HepG2 (cell line): ENCODE measurements at regions of chr2 and their contacts with region 1.

Region 1: DNA sequence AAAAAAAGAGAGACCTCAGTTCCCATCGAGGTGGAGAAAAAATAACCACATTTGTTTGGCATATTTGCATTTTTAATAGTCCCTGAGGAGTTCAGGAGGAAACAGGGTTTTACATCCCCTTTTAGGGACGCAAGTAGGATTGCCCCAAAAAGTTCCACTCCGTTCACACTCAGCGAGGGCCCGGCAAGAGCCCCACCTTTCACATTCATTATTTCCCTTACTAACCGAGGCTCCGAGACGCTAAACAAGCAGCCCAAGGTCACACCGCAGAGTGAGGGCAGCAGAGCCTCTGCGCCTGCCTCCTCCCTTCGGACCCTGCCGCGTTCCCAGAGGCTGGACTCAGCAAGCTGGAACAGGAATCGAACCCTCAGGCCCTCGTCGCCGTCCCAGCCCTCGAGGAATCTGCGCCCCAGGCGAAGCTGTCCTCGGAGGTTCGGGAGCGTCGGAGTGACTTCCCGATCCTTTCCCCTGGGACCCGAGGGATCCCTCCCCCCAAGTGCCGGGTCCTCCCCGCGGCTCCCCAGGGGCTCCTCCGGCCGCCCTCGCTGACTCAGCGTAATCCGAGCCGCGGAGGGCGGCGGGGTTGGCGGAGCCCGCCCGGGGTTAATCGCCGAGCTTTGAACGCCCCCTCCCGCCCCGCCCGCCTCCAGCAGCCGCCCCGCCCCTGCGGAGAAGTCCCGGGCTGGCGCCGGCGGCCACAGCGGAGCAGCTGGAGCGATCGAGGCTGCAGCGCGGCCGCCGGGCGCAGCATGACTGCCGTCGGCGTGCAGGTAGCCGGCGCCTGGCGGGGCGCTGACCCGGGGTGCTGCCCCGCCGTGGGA is at the start of gene TMEM37:
- DNase-seq: peak; percentile 79
- ATAC-seq: peak; percentile 70
- H3K4me3 ChIP-seq: peak within 1 kb of the TSS; percentile 84 to 90 (median 86)
- H3K27ac ChIP-seq: peak within 1 kb of the TSS; percentile 88
- H3K4me1 ChIP-seq: peaks cover 88% of the 10 kb centered on the region
- H3K27me3 ChIP-seq: no peaks in the 10 kb centered on the region; a peak in 1 of 5 replicates
- CTCF ChIP-seq: 0 out of 2 replicates have a peak, but pooled peaks have one; percentile 2
- EP300 ChIP-seq: peak in 1 of 2 experiments; percentile 64; a peak in 2 of 4 replicates
- POLR2A ChIP-seq: peak in 1 of 2 experiments; percentile 79; a peak in 1 of 4 replicates
- RAD21 ChIP-seq: 0 out of 2 replicates have a peak, but pooled peaks have one; percentile 14
- total RNA-seq, gene TMEM37: 23.7 and 37.7 TPM in 2 replicates

Region 2: GRCh38 chr2:119441376-119442225 is 10.2 kb after region 1 on chr2:
- CTCF ChIA-PET with region 1: no interaction called
- POLR2A ChIA-PET with region 1: interaction called, 21 read pairs
- in situ Hi-C with region 1: no loop called
- intact Hi-C with region 1: no loop called
- DNase-seq: no peak
- ATAC-seq: no peak
- H3K4me3 ChIP-seq: no peak overlapping the region; a peak in 1 of 6 replicates
- H3K27ac ChIP-seq: no peak overlapping the region
- H3K4me1 ChIP-seq: peaks cover 64% of the 10 kb centered on the region
- H3K27me3 ChIP-seq: peaks cover 0 to 1% of the 10 kb centered on the region in 2 experiments; a peak in 1 of 5 replicates
- CTCF ChIP-seq: no peak
- EP300 ChIP-seq: no peak
- POLR2A ChIP-seq: no peak; a peak in 1 of 4 replicates
- RAD21 ChIP-seq: no peak

Region 3: DNA sequence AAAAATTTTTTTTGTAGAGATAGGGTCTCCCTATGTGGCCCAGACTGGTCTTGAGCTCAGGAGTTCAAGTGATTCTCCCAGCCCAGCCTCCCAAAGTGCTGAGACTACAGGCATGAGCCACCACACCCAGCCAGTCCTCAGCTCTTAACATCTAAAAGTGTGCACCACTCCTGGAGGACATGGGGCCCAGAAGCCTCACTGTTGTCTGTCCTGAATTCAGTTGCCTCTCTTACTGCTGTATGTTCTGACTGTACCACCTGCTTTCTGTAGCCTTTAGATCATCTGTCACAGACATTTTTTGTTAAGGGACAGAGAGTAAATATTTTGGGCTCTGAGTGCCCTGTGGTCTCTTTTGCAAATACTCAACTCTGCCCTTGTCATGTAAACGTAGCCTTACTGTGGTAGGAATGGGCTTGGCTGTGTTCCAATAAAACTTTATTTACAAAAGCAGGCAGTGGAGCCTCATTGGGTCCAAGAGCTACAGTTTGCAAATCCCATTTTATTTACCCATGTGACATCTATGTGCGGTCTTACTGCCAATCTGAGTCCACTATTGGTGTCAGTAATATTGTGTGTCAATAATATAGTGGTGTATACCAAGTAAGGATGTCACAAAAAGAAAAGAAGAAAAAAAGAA is 38.4 kb after region 1 on chr2:
- CTCF ChIA-PET with region 1: no interaction called
- POLR2A ChIA-PET with region 1: interaction called, 4 read pairs
- in situ Hi-C with region 1: loop called (anchors 5 kb)
- intact Hi-C with region 1: no loop called
- DNase-seq: peak; percentile 82
- ATAC-seq: peak; percentile 67
- H3K4me3 ChIP-seq: no peak overlapping the region
- H3K27ac ChIP-seq: no peak overlapping the region
- H3K4me1 ChIP-seq: peaks cover 50% of the 10 kb centered on the region
- H3K27me3 ChIP-seq: peaks cover 3 to 44% of the 10 kb centered on the region in 2 experiments; a peak in 4 of 5 replicates
- CTCF ChIP-seq: no peak
- EP300 ChIP-seq: no peak
- POLR2A ChIP-seq: no peak
- RAD21 ChIP-seq: no peak

Region 4: GRCh38 chr2:119531292-119531691 is 99.9 kb after region 1 on chr2:
- CTCF ChIA-PET with region 1: no interaction called
- POLR2A ChIA-PET with region 1: no interaction called
- in situ Hi-C with region 1: no loop called
- intact Hi-C with region 1: no loop called
- DNase-seq: peak; percentile 47
- ATAC-seq: peak; percentile 35; the same call in 1 of the 3 replicates
- H3K4me3 ChIP-seq: no peak overlapping the region
- H3K27ac ChIP-seq: no peak overlapping the region
- H3K4me1 ChIP-seq: 0 out of 2 replicates have a peak, but pooled peaks cover 7% of the 10 kb centered on the region
- H3K27me3 ChIP-seq: peaks cover 1 to 26% of the 10 kb centered on the region in 2 experiments; a peak in 2 of 5 replicates
- CTCF ChIP-seq: peak; percentile 43; the same call in 1 of the 2 replicates
- EP300 ChIP-seq: no peak
- POLR2A ChIP-seq: no peak
- RAD21 ChIP-seq: no peak

Region 5: GRCh38 chr2:119766944-119767343 is 335.6 kb after region 1 on chr2:
- CTCF ChIA-PET with region 1: no interaction called
- POLR2A ChIA-PET with region 1: no interaction called
- in situ Hi-C with region 1: no loop called
- intact Hi-C with region 1: no loop called
- DNase-seq: no peak
- ATAC-seq: peak; percentile 84
- H3K4me3 ChIP-seq: no peak overlapping the region
- H3K27ac ChIP-seq: no peak overlapping the region
- H3K4me1 ChIP-seq: peaks cover 77% of the 10 kb centered on the region
- H3K27me3 ChIP-seq: no peaks in the 10 kb centered on the region
- CTCF ChIP-seq: no peak
- EP300 ChIP-seq: no peak
- POLR2A ChIP-seq: no peak
- RAD21 ChIP-seq: no peak